ENCODE measurements at regions of chr17 and their contacts with region 1.

Region 1: GRCh38 chr17:35432176-35433074 is at the start of gene SLFN12:
- DNase-seq: no peak
- H3K4me3 ChIP-seq: no peak within 1 kb of the TSS
- H3K4me3 Mint-ChIP-seq: no peak within 1 kb of the TSS
- H3K27ac Mint-ChIP-seq: peak within 1 kb of the TSS; percentile 81
- H3K4me1 ChIP-seq: peaks cover 11% of the 10 kb centered on the region
- H3K4me1 Mint-ChIP-seq: peaks cover 12% of the 10 kb centered on the region
- H3K27me3 ChIP-seq: no peaks in the 10 kb centered on the region
- H3K27me3 Mint-ChIP-seq: peaks cover 5% of the 10 kb centered on the region
- CTCF ChIP-seq: no peak
- total RNA-seq, gene SLFN12: not detected in 2 replicates

Region 2: GRCh38 chr17:35460354-35460851 is 28.0 kb after region 1 on chr17:
- CTCF ChIA-PET with region 1: no interaction called
- POLR2A ChIA-PET with region 1: no interaction called
- intact Hi-C with region 1: loop called (anchors 1 kb)
- DNase-seq: peak; percentile 77 to 86
- H3K4me3 ChIP-seq: peak overlapping the region; percentile 34
- H3K4me3 Mint-ChIP-seq: peak overlapping the region; percentile 68
- H3K27ac Mint-ChIP-seq: no peak overlapping the region
- H3K4me1 ChIP-seq: no peaks in the 10 kb centered on the region
- H3K4me1 Mint-ChIP-seq: peaks cover 6% of the 10 kb centered on the region
- H3K27me3 ChIP-seq: no peaks in the 10 kb centered on the region
- H3K27me3 Mint-ChIP-seq: peaks cover 18% of the 10 kb centered on the region
- CTCF ChIP-seq: no peak

Region 3: DNA sequence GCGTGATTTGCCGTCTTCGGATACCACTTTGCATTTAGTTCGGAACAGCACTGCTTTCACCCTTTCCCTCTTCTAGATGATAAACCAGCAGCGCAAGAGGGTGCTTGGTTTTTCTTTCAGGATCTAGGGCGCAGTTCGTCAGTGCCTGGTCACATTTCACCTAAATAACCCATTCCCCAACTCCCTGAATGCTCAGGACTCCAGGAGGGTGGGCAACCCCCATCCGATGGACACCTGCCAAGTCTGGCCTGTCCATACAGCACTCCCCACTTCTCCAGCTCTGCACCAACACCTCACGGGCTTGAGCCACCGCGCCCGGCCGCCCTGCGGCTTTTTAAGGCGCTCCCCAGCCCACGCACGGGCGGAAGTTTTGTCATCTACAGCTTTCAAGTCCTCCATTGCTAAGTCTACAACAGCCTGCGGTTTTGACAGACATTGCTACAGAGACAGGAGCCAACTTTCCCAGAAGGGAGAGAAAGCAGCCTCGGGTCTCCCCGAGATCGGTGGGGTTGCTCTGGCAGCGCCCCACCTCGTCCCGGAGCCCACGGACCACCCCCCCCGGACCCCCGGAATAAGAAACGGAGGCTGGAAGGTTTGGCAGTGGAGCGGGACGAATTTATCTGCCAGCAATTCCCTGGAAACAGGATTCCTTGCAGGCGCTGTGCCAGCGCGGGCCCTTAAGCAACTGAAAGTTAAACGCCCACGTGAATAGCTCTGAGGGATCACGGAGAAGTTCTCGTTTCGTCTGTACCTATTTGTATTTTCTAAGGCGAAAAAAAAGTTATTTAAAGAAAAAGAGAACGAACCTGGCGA is 54.7 kb after region 1 on chr17:
- CTCF ChIA-PET with region 1: no interaction called
- POLR2A ChIA-PET with region 1: no interaction called
- intact Hi-C with region 1: no loop called
- DNase-seq: no peak
- H3K4me3 ChIP-seq: no peak overlapping the region
- H3K4me3 Mint-ChIP-seq: no peak overlapping the region
- H3K27ac Mint-ChIP-seq: no peak overlapping the region
- H3K4me1 ChIP-seq: no peaks in the 10 kb centered on the region
- H3K4me1 Mint-ChIP-seq: no peaks in the 10 kb centered on the region
- H3K27me3 ChIP-seq: no peaks in the 10 kb centered on the region
- H3K27me3 Mint-ChIP-seq: peaks cover 17% of the 10 kb centered on the region
- CTCF ChIP-seq: no peak